ENCODE measurements at regions of chr6 and their contacts with region 1.

Region 1: DNA sequence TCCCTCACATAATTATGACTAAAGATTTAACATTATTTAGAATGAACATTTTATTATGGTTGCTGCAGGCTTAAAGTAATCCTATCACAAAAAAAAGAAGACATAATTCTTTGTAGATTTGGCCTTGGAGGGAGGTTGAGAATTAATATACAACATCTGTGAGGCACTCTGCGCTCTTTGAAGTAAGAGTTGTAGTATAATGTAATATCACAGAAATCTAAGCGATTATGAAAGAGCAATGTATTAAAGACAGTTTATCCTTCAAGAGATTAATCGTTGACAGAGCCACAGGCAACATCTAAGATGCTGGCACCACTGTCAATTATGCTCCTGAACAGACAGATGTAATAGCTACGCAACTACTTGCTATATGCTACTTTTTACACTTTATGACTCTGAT is 946.8 kb downstream of the GRIK2 start:
- DNase-seq: no peak
- H3K4me3 ChIP-seq: no peak overlapping the region
- H3K27ac ChIP-seq: no peak overlapping the region
- H3K4me1 ChIP-seq: no peaks in the 10 kb centered on the region
- H3K27me3 ChIP-seq: no peaks in the 10 kb centered on the region
- CTCF ChIP-seq: no peak

Region 2: GRCh38 chr6:102438171-102438570 is 97.9 kb after region 1 on chr6:
- CTCF ChIA-PET with region 1: no interaction called
- POLR2A ChIA-PET with region 1: no interaction called
- intact Hi-C with region 1: loop called (anchors 5 kb)
- DNase-seq: no peak
- H3K4me3 ChIP-seq: no peak overlapping the region
- H3K27ac ChIP-seq: no peak overlapping the region
- H3K4me1 ChIP-seq: no peaks in the 10 kb centered on the region
- H3K27me3 ChIP-seq: no peaks in the 10 kb centered on the region
- CTCF ChIP-seq: no peak

Measured in PC-9 (cell line).